ENCODE measurements at regions of chr3 and their contacts with region 1.

Region 1: GRCh38 chr3:114454551-114455251 is 160.9 kb downstream of the TIGIT start:
- DNase-seq: no peak
- ATAC-seq: no peak
- H3K4me3 ChIP-seq: peak overlapping the region; percentile 35
- H3K27ac ChIP-seq: no peak overlapping the region
- H3K4me1 ChIP-seq: peaks cover 6% of the 10 kb centered on the region
- H3K27me3 ChIP-seq: no peaks in the 10 kb centered on the region
- CTCF ChIP-seq: no peak
- POLR2A ChIP-seq: no peak
- RAD21 ChIP-seq: no peak

Region 2: GRCh38 chr3:114194750-114195149 is 260.0 kb before region 1 on chr3:
- CTCF ChIA-PET with region 1: no interaction called
- POLR2A ChIA-PET with region 1: no interaction called
- dilution Hi-C with region 1: no loop called
- in situ Hi-C with region 1: no loop called
- intact Hi-C with region 1: no loop called
- DNase-seq: no peak
- ATAC-seq: no peak
- H3K4me3 ChIP-seq: no peak overlapping the region
- H3K27ac ChIP-seq: no peak overlapping the region
- H3K4me1 ChIP-seq: no peaks in the 10 kb centered on the region
- H3K27me3 ChIP-seq: no peaks in the 10 kb centered on the region; the same call in none of the 2 replicates
- CTCF ChIP-seq: no peak
- POLR2A ChIP-seq: no peak
- RAD21 ChIP-seq: no peak

Region 3: DNA sequence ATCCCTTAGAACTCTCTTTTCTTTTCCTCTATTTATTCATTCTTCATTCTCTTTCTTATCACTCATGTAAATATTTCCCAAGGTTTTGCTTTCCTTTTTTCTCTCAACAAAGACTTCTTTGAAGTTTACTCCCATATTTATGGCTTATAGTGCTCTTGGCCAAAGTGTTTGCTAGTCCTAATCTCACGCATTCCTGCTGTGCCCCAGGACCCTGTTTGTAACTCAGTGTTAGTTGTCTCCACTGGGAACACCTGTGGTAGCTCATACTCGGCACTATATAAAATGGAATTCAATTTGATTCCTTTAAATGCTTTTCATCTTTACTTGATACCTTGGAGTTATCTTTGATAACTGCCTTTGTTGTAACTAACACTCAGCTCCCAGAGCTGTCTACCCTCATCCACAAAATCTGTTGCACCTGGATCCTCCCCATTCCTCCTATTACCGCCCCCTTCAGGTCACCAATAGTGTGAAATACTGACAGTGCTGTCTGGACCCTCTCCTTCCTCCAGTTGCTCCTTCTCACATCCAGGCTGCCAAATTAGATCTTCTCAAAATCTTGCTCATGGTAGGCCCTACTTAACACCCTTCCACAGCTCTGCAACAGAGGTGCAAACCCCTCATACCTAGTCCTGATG is 84.0 kb before region 1 on chr3:
- CTCF ChIA-PET with region 1: no interaction called
- POLR2A ChIA-PET with region 1: interaction called, 25 read pairs
- dilution Hi-C with region 1: no loop called
- in situ Hi-C with region 1: no loop called
- intact Hi-C with region 1: no loop called
- DNase-seq: no peak
- ATAC-seq: no peak
- H3K4me3 ChIP-seq: no peak overlapping the region
- H3K27ac ChIP-seq: no peak overlapping the region
- H3K4me1 ChIP-seq: no peaks in the 10 kb centered on the region; the same call in 1 of the 2 replicates
- H3K27me3 ChIP-seq: no peaks in the 10 kb centered on the region
- CTCF ChIP-seq: no peak
- POLR2A ChIP-seq: no peak
- RAD21 ChIP-seq: no peak

Region 4: GRCh38 chr3:114538211-114538610 is 83.5 kb after region 1 on chr3:
- CTCF ChIA-PET with region 1: no interaction called
- POLR2A ChIA-PET with region 1: interaction called, 11 read pairs
- dilution Hi-C with region 1: no loop called
- in situ Hi-C with region 1: no loop called
- intact Hi-C with region 1: no loop called
- DNase-seq: no peak
- ATAC-seq: no peak
- H3K4me3 ChIP-seq: no peak overlapping the region
- H3K27ac ChIP-seq: no peak overlapping the region
- H3K4me1 ChIP-seq: no peaks in the 10 kb centered on the region
- H3K27me3 ChIP-seq: no peaks in the 10 kb centered on the region
- CTCF ChIP-seq: no peak
- POLR2A ChIP-seq: no peak
- RAD21 ChIP-seq: no peak

Region 5: GRCh38 chr3:114942773-114943172 is 488.1 kb after region 1 on chr3:
- CTCF ChIA-PET with region 1: no interaction called
- POLR2A ChIA-PET with region 1: no interaction called
- dilution Hi-C with region 1: no loop called
- in situ Hi-C with region 1: no loop called
- intact Hi-C with region 1: no loop called
- DNase-seq: no peak
- ATAC-seq: no peak
- H3K4me3 ChIP-seq: no peak overlapping the region
- H3K27ac ChIP-seq: no peak overlapping the region
- H3K4me1 ChIP-seq: no peaks in the 10 kb centered on the region
- H3K27me3 ChIP-seq: no peaks in the 10 kb centered on the region
- CTCF ChIP-seq: no peak
- POLR2A ChIP-seq: no peak
- RAD21 ChIP-seq: no peak

Measured in IMR-90 (cell line).